ENCODE measurements at regions of chr15 and their contacts with region 1.

Region 1: GRCh38 chr15:39782441-39783138 is at the start of gene FSIP1:
- DNase-seq: peak; percentile 91 to 98 (median 96)

Region 2: DNA sequence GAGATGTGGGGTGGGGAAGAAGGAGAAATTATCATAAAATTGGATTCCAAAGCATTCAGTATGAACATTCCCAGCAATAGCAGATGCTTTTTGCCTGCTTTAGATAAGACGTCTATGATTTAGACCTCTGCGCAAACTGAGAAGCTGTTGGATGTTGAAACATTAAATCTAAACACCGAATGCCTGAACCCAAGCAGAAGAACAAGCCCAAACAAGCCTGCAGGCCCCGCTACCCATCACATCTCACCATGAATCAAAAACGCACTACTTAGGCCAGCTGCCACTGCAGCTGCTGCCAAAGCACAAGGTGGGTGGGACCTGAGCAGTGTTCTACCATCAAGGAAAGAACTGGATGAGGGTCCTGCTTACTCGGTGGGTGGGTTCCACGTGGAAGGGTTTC is 226.1 kb before region 1 on chr15:
- intact Hi-C with region 1: no loop called
- DNase-seq: no peak

Region 3: DNA sequence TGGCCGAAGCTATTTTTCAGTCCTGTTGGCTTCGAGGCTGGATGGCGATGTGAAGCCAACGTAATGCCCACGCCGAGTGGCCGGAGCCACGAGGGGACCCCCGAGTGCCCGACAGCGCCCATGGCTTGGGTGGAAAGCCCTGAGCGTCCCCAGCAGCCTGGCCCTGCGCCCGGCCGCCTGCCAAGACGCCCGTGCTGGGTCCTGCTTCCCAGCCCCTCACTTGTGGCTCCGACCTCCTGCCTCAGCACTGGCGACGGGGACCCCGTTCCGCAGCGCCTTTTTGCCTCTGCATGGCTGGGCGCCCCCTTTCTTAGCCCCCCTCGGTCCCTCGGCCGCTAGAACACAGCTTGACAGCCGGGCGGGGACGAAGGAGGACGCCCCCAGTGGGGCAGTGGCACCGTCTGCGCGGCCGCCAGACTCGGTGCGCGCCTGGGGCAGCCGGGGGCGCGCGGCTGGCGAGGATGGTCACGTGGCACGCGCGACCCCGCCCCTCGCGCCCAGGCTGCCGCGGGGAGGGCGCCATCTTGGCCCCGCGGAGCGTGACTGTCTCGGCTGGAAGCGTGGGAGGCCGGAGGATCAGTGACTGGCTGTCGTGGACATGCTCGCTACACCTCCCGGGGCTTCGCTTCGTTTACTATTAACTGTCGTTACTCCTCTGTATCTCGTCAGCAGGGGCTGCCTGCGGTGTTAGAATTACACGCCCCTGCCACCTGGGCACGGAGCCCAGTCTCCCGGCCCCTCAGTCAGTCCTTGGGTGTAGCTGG is 138.1 kb after region 1 on chr15:
- intact Hi-C with region 1: loop called (anchors 5 kb)
- DNase-seq: peak; percentile 59 to 93 (median 85)

Region 4: DNA sequence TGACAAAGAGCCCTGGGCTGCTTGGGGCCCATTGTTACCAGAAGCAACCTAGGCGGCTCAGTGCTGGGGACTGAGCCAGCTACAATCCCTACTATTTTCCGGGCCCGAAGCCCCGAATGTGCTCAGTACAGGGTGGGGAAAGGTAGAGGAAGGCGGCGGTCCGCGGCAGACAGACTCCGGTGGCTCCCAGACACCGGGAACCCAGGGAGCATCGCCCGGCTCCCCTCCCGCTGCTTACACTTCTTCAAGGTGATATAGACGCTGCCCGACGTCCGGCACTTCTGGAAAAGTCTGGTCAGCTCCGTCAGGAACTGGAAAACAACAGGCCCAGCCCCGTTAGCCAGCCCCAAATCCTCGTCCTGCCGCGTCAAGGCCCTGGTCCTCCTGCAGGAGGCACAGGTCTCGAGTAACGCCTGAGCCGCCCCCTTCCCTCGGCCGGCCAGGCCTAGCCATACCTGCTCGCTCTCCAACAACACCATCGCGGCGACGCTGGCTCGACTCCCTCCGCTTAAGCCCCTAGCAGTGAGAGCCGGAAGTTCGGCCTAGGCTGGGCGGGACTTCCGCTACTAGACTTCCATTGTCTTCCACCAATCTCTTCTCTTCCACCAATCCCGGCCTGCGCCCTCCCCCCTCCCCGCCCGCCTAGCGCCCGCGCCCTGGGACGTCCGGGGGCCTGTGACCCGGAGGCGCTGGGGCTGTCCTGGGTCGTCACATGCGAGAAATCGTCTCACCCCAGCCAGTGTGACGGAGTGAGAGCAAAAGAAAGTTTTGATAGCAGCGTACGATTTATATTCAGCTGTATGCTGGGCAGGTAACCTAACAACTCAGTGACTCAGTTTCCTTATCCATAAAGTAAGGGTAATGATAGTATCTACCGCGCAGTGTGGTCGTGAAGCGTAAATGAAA is 256.3 kb after region 1 on chr15 and contains the start of gene SRP14:
- intact Hi-C with region 1: loop called (anchors 5 kb)
- DNase-seq: peak; percentile 92 to 98 (median 96)